ENCODE measurements at regions of chr11 and their contacts with region 1.

Region 1: DNA sequence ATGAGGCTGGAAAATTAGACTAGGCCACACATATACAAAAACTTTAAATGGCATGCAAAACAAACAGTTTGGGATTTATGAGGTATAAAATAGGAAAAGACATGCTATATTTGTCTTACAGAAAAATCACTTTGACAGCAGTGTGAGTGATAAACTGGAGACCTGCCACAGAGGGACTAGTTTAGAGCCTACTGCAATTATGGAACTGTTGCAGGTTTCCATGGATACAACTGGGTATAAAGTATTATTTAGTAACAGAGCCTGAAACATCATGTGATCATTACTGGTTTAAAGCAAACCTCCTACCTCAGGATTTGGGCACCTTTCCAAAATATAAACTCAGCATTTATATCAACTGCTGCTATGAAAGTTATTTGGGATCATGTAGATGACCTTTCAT is 1032.5 kb downstream of the DLG2 start:
- DNase-seq: no peak
- ATAC-seq: no peak
- H3K4me3 ChIP-seq: no peak overlapping the region
- H3K4me3 Mint-ChIP-seq: no peak overlapping the region
- H3K27ac ChIP-seq: no peak overlapping the region
- H3K27ac Mint-ChIP-seq: no peak overlapping the region
- H3K4me1 ChIP-seq: no peaks in the 10 kb centered on the region
- H3K4me1 Mint-ChIP-seq: no peaks in the 10 kb centered on the region
- H3K27me3 ChIP-seq: no peaks in the 10 kb centered on the region
- H3K27me3 Mint-ChIP-seq: no peaks in the 10 kb centered on the region

Region 2: GRCh38 chr11:83648610-83649527 is 945.7 kb before region 1 on chr11:
- CTCF ChIA-PET with region 1: no interaction called
- POLR2A ChIA-PET with region 1: interaction called in 1 of 2 experiments, 13 read pairs
- DNase-seq: no peak
- ATAC-seq: no peak
- H3K4me3 ChIP-seq: no peak overlapping the region
- H3K4me3 Mint-ChIP-seq: no peak overlapping the region
- H3K27ac ChIP-seq: no peak overlapping the region
- H3K27ac Mint-ChIP-seq: no peak overlapping the region
- H3K4me1 ChIP-seq: no peaks in the 10 kb centered on the region
- H3K4me1 Mint-ChIP-seq: no peaks in the 10 kb centered on the region
- H3K27me3 ChIP-seq: no peaks in the 10 kb centered on the region
- H3K27me3 Mint-ChIP-seq: no peaks in the 10 kb centered on the region

Region 3: GRCh38 chr11:85444479-85444878 is 849.9 kb after region 1 on chr11:
- CTCF ChIA-PET with region 1: no interaction called
- POLR2A ChIA-PET with region 1: interaction called in 1 of 2 experiments, 14 read pairs
- DNase-seq: no peak
- ATAC-seq: no peak
- H3K4me3 ChIP-seq: no peak overlapping the region
- H3K4me3 Mint-ChIP-seq: no peak overlapping the region
- H3K27ac ChIP-seq: no peak overlapping the region
- H3K27ac Mint-ChIP-seq: no peak overlapping the region
- H3K4me1 ChIP-seq: no peaks in the 10 kb centered on the region
- H3K4me1 Mint-ChIP-seq: no peaks in the 10 kb centered on the region
- H3K27me3 ChIP-seq: no peaks in the 10 kb centered on the region
- H3K27me3 Mint-ChIP-seq: no peaks in the 10 kb centered on the region